Dendritic cell treated with granulocyte-macrophage colony-stimulating factor and Interleukin-4, amounts not matched to agents 40 ng/mL and 50 ng/mL, for 4 days (primary cell): ENCODE measurements at regions of chrX and their contacts with region 1.

Region 1: GRCh38 chrX:27186664-27187063 is 276.5 kb downstream of the PPP4R3C start:
- H3K4me3 Mint-ChIP-seq: no peak overlapping the region
- H3K27ac Mint-ChIP-seq: no peak overlapping the region
- H3K4me1 Mint-ChIP-seq: no peaks in the 10 kb centered on the region
- H3K27me3 Mint-ChIP-seq: no peaks in the 10 kb centered on the region

Region 2: DNA sequence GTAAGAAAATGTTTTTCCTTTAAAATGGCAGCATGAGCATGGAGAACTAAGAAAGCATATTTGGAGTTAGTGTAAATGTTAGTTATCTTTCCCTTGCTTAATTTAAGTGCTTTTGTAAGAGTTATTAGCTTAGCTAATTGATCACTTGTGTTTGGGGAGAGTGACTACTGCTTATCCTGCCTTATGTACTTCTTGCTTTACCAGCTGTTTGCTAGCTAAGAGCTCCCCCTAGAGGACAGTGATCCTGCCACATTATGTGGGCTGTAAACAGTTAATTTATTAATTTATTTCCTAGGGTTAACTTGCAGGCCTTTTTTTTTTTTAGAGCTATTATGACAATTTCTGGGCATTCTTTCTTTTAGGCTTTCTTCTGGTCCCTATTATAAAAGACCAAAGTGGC is 534.9 kb before region 1 on chrX:
- intact Hi-C with region 1: loop called (anchors 5 kb)
- H3K4me3 Mint-ChIP-seq: no peak overlapping the region
- H3K27ac Mint-ChIP-seq: no peak overlapping the region
- H3K4me1 Mint-ChIP-seq: no peaks in the 10 kb centered on the region
- H3K27me3 Mint-ChIP-seq: no peaks in the 10 kb centered on the region

Region 3: DNA sequence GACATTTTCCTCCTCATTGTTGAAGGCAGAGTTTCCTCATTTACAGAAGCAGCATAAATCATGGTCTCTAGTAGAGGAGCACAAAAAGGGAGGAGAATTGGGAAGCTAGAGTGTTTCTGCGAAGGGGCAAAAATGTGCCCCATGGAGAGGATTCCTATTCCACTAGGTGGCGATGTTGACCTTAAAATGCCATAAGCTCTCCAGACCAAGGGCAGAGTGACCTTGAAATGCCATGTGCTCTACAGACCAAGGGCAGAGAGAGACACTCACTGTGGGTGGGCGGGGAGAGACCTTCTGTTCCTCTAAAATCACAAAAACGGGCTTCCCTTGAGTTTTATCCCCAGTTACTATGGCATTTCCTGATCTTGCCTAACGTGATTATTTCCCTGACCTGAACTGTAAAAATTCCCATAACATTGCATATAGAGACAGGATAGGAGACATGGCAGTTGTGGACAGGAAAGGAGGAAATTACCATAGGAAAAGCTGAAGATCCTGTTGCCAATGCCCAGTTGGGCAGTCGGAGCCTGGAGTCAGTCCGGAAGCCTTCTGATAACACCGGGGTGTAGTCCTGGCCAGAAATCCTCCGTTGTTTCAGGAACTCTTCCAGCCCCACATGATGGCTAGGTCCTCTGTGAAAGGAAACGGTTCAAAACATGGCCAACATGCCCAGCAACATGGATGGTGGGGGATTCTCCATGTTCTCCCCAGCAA is 403.0 kb before region 1 on chrX:
- intact Hi-C with region 1: loop called (anchors 10 kb)
- H3K4me3 Mint-ChIP-seq: no peak overlapping the region
- H3K27ac Mint-ChIP-seq: no peak overlapping the region
- H3K4me1 Mint-ChIP-seq: no peaks in the 10 kb centered on the region
- H3K27me3 Mint-ChIP-seq: no peaks in the 10 kb centered on the region

Region 4: GRCh38 chrX:26873736-26874135 is 312.9 kb before region 1 on chrX:
- intact Hi-C with region 1: no loop called
- H3K4me3 Mint-ChIP-seq: no peak overlapping the region
- H3K27ac Mint-ChIP-seq: no peak overlapping the region
- H3K4me1 Mint-ChIP-seq: no peaks in the 10 kb centered on the region
- H3K27me3 Mint-ChIP-seq: no peaks in the 10 kb centered on the region